ENCODE measurements at regions of chr15 and their contacts with region 1.

Region 1: GRCh38 chr15:86894920-86895319 is 815.2 kb downstream of the AGBL1 start:
- DNase-seq: no peak
- H3K4me3 ChIP-seq: no peak overlapping the region
- H3K27ac ChIP-seq: no peak overlapping the region
- H3K4me1 ChIP-seq: peaks cover 18% of the 10 kb centered on the region
- H3K27me3 ChIP-seq: no peaks in the 10 kb centered on the region
- CTCF ChIP-seq: no peak

Region 2: DNA sequence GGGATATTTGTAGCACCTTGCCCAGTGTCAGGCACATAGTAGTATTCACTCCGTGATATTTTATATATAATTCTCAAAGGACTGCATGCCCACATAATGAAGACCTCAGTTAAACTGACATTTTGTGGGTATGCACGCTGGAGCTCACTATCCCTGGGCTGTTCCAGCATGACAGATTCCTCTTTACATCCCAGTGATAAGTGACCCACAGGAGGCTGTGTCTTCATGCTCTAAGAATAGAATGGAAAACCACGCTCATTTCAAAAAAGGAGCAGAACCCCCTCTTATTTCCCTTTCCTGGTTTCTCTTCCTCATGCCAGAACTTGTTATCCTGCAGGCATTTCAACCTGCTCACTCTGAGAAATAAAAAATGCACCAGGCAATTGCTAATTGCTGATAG is 97.8 kb before region 1 on chr15:
- intact Hi-C with region 1: no loop called
- DNase-seq: no peak
- H3K4me3 ChIP-seq: no peak overlapping the region
- H3K27ac ChIP-seq: no peak overlapping the region
- H3K4me1 ChIP-seq: peaks cover 3% of the 10 kb centered on the region
- H3K27me3 ChIP-seq: no peaks in the 10 kb centered on the region
- CTCF ChIP-seq: no peak

Region 3: DNA sequence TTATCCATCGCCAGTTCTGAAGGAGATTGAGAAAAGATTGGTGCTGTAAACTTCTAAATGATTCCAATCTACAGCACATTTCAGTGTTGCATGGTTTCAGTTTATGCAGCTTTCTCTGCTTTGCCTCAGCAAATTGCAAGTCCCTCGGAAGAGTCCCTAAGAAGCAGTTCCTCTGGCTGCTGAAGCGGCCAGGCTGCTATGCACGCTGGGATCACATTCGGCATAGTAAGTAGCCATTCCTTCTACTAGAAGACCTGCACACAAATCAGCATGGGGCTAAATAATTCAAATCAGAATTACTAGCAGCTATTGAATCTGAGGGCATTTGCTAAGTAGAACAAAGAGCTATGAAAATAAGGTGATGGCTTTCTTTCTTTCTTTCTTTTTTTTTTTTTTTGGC is 45.8 kb before region 1 on chr15:
- intact Hi-C with region 1: no loop called
- DNase-seq: no peak
- H3K4me3 ChIP-seq: no peak overlapping the region
- H3K27ac ChIP-seq: peak overlapping the region; percentile 76
- H3K4me1 ChIP-seq: peaks cover 28% of the 10 kb centered on the region
- H3K27me3 ChIP-seq: no peaks in the 10 kb centered on the region
- CTCF ChIP-seq: no peak

Region 4: DNA sequence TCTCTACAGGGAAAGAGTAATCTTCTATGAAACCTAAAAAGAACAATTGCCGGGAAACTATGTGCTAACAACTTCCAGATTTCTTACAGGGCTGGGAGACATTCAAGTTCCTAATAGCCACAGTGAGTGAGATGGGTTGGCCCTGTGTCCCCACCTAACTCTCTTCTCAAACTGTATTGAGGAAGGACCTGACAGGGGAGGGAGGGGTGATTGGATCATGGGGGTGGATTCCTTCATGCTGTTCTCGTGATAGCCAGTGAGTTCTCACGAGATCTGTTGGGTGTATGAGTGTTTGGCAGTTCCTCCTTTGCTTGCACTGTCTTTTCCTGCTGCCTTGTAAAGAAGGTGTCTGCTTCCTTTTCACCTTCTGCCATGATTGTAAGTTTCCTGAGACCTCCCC is 143.5 kb after region 1 on chr15:
- intact Hi-C with region 1: loop called (anchors 5 kb)
- DNase-seq: no peak
- H3K4me3 ChIP-seq: no peak overlapping the region
- H3K27ac ChIP-seq: no peak overlapping the region
- H3K4me1 ChIP-seq: no peaks in the 10 kb centered on the region
- H3K27me3 ChIP-seq: no peaks in the 10 kb centered on the region
- CTCF ChIP-seq: no peak

Measured in left ventricle myocardium inferior (tissue), 1 donor.